CD8-positive, alpha-beta T cell (primary cell): ENCODE measurements at regions of chrX and their contacts with region 1.

Region 1: GRCh38 chrX:48917139-48918001 is 1.5 kb downstream of the PIM2 start:
- DNase-seq: peak; percentile 77 to 93 (median 88)
- ATAC-seq: peak; percentile 37
- H3K4me3 ChIP-seq: peak overlapping the region; percentile 92 to 95
- H3K4me3 Mint-ChIP-seq: peak overlapping the region; percentile 97
- H3K27ac ChIP-seq: peak overlapping the region; percentile 75 to 100
- H3K27ac Mint-ChIP-seq: peak overlapping the region; percentile 97
- H3K4me1 ChIP-seq: peaks cover 58% of the 10 kb centered on the region
- H3K4me1 Mint-ChIP-seq: peaks cover 56% of the 10 kb centered on the region
- H3K27me3 ChIP-seq: no peaks in the 10 kb centered on the region
- H3K27me3 Mint-ChIP-seq: no peaks in the 10 kb centered on the region
- CTCF ChIP-seq: peak; percentile 77

Region 2: DNA sequence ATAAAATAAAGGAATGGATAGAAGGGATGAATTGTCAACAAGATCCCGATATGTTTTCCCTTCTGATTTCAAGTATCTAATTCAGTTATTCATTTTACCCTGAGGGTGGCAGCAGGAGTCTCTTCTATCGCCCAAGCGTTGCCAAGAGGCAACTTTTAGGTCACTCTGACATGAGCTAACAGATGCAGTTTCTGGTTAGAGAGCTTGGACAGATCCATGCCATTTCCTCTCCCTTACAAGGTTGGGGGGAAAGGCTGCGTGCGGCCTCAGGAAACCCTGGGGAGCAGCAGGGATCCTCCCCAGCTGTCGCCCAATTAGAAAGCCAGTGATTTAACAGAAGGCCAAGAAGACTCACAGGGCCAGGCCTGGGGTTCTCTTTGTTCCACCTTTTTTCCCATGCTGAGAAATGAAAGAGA is 269.0 kb before region 1 on chrX:
- CTCF ChIA-PET with region 1: interaction called, 9 read pairs
- POLR2A ChIA-PET with region 1: no interaction called
- intact Hi-C with region 1: loop called (anchors 1 kb)
- DNase-seq: peak in 7 of 9 experiments; percentile 8 to 72 (median 41)
- ATAC-seq: peak; percentile 71
- H3K4me3 ChIP-seq: no peak overlapping the region
- H3K4me3 Mint-ChIP-seq: no peak overlapping the region
- H3K27ac ChIP-seq: no peak overlapping the region
- H3K27ac Mint-ChIP-seq: no peak overlapping the region
- H3K4me1 ChIP-seq: no peaks in the 10 kb centered on the region
- H3K4me1 Mint-ChIP-seq: peaks cover 7% of the 10 kb centered on the region
- H3K27me3 ChIP-seq: no peaks in the 10 kb centered on the region
- H3K27me3 Mint-ChIP-seq: no peaks in the 10 kb centered on the region
- CTCF ChIP-seq: peak; percentile 58

Region 3: GRCh38 chrX:48897621-48898306 is 19.6 kb before region 1 on chrX and contains the starts of genes PQBP1 and TIMM17B:
- CTCF ChIA-PET with region 1: interaction called, 4 read pairs
- POLR2A ChIA-PET with region 1: interaction called, 16 read pairs
- intact Hi-C with region 1: loop called in 1 of 2 experiments (anchors 1 kb)
- DNase-seq: peak; percentile 72 to 96 (median 84)
- ATAC-seq: peak; percentile 86
- H3K4me3 ChIP-seq: peak within 1 kb of the TSS; percentile 87 to 98
- H3K4me3 Mint-ChIP-seq: peak within 1 kb of the TSS; percentile 88
- H3K27ac ChIP-seq: peak within 1 kb of the TSS; percentile 98
- H3K27ac Mint-ChIP-seq: peak within 1 kb of the TSS; percentile 95
- H3K4me1 ChIP-seq: peaks cover 21% of the 10 kb centered on the region
- H3K4me1 Mint-ChIP-seq: peaks cover 29% of the 10 kb centered on the region
- H3K27me3 ChIP-seq: no peaks in the 10 kb centered on the region
- H3K27me3 Mint-ChIP-seq: no peaks in the 10 kb centered on the region
- CTCF ChIP-seq: no peak
- total RNA-seq, gene PQBP1: 79.9 to 82.1 TPM
- total RNA-seq, gene TIMM17B: 35.0 to 37.6 TPM

Region 4: GRCh38 chrX:48945516-48946348 is 28.4 kb after region 1 on chrX:
- CTCF ChIA-PET with region 1: interaction called, 8 read pairs
- POLR2A ChIA-PET with region 1: interaction called, 64 read pairs
- intact Hi-C with region 1: loop called (anchors 1 to 5 kb)
- DNase-seq: peak in 8 of 9 experiments; percentile 10 to 78 (median 62)
- ATAC-seq: peak; percentile 70
- H3K4me3 ChIP-seq: no peak overlapping the region
- H3K4me3 Mint-ChIP-seq: peak overlapping the region; percentile 11
- H3K27ac ChIP-seq: no peak overlapping the region
- H3K27ac Mint-ChIP-seq: peak overlapping the region; percentile 67
- H3K4me1 ChIP-seq: peaks cover 52% of the 10 kb centered on the region
- H3K4me1 Mint-ChIP-seq: peaks cover 45% of the 10 kb centered on the region
- H3K27me3 ChIP-seq: no peaks in the 10 kb centered on the region
- H3K27me3 Mint-ChIP-seq: no peaks in the 10 kb centered on the region
- CTCF ChIP-seq: peak; percentile 68

Region 5: DNA sequence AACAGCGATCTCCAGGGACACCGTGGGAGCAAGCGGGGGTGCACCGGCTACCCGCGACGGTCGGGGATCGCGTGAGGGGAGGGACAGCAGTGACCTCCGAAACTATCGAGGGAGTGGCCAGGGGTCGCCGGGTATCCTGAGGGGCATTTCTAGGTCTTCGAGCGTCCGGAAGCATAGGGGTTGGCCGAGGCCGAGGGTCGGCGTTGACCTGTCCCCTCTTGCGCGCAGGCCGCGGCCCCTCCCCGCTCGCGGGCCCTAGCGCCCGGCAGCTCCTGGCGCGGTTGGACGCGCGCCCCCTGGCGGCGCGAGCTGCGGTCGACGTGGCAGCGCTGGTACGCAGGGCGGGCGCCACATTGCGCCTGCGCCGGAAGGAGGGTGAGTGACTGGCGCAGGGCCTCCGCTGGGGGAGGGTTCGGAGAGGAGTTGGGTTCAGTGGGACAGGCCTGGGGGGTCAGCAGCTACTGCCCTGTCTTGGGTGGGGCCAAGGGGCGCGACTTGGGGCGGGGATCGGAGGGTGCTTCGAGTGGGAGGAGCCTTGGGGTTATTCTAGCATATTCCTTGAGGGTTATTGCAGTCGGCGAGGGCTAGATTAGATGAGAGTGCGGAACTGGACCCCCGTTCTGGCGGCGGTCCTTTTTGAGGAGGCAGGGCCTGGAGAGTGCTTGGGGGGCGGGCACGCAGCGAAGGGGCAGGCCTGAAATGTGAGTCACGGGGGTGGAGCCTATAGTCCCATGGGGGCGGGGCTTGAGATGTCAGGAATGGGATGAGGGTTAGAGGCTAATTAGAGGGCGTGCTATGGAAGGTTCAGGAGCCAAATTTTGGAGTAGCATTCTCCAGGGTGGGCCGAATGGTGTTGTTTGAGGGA is 246.4 kb after region 1 on chrX:
- CTCF ChIA-PET with region 1: no interaction called
- POLR2A ChIA-PET with region 1: no interaction called
- intact Hi-C with region 1: loop called in 1 of 2 experiments (anchors 10 kb)
- DNase-seq: peak in 8 of 9 experiments; percentile 67 to 91 (median 82)
- ATAC-seq: peak; percentile 54
- H3K4me3 ChIP-seq: peak overlapping the region; percentile 49
- H3K4me3 Mint-ChIP-seq: peak overlapping the region; percentile 81
- H3K27ac ChIP-seq: peak overlapping the region; percentile 56 to 84
- H3K27ac Mint-ChIP-seq: peak overlapping the region; percentile 92
- H3K4me1 ChIP-seq: peaks cover 21% of the 10 kb centered on the region
- H3K4me1 Mint-ChIP-seq: peaks cover 27% of the 10 kb centered on the region
- H3K27me3 ChIP-seq: no peaks in the 10 kb centered on the region
- H3K27me3 Mint-ChIP-seq: no peaks in the 10 kb centered on the region
- CTCF ChIP-seq: peak; percentile 57